ENCODE measurements at regions of chr15 and their contacts with region 1.

Region 1: DNA sequence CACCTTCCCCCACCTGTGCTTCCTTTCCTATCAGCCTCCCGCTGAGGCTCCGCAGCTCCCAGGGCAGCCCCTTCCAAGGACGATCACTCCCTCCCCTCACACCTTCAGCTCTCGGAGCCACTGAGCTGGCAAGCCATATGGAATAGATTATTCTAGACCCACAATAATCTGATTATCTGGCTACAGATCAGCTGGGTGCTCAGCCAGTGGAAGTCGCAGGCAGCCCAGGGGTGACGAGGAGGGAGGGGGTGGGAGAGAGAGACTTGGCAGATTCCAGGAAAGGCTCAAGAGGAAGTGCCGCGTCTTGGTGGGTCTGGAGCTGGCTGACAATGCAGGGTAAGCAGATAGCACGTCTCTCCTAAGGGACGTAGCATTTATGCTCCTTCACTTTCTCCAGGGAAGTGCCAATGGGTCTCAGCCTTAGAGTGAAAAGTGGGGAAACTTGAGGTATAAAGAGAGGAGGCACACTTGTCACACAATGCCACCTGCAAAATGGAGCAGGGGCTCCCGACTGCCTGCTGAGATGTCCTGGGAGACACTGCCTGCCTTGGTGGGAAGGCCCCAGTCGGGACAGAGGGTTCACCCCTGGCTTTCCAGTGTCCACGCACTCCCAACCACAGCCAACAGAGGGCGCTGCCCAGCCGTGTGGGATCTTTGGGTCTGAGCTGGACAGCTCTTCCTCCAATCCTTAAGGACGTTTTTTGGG is 9.4 kb upstream of the MESP1 start:
- DNase-seq: peak; percentile 53 to 99
- H3K4me3 ChIP-seq: no peak overlapping the region
- H3K27ac ChIP-seq: no peak overlapping the region
- H3K4me1 ChIP-seq: peaks cover 0 to 2% (median 0%) of the 10 kb centered on the region in 4 experiments; a peak in 3 of 7 replicates
- H3K27me3 ChIP-seq: no peaks in the 10 kb centered on the region; a peak in 2 of 7 replicates
- CTCF ChIP-seq: peak; percentile 95 to 97 (median 97)
- EP300 ChIP-seq: no peak
- POLR2A ChIP-seq: no peak
- RAD21 ChIP-seq: peak; percentile 95

Region 2: DNA sequence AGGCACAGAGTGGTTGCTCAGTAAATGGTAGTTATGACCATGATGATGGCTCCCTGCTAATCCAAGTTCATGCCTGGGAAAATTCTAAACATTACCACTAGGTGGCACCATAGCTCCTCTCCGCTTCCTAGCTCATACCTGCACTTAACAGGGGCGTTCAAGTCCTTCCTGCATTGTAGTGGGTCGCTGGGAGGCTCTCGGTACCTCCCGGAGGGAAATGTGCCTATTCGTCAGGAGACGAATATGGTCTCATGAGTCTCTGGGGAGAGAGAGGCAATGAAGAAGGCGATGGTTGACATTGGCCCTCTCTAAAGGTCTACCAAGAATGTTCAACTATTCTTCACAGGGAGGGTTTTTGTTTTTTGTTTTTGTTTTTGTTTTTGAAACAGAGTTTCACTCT is 20.3 kb before region 1 on chr15:
- CTCF ChIA-PET with region 1: interaction called, 17 read pairs
- POLR2A ChIA-PET with region 1: no interaction called
- DNase-seq: peak; percentile 62 to 73
- H3K4me3 ChIP-seq: no peak overlapping the region
- H3K27ac ChIP-seq: no peak overlapping the region
- H3K4me1 ChIP-seq: no peaks in the 10 kb centered on the region
- H3K27me3 ChIP-seq: peaks cover 0 to 2% (median under 1%) of the 10 kb centered on the region in 4 experiments; a peak in 5 of 7 replicates
- CTCF ChIP-seq: peak; percentile 29 to 92 (median 83)
- EP300 ChIP-seq: no peak
- POLR2A ChIP-seq: no peak
- RAD21 ChIP-seq: peak; percentile 92 to 95

Region 3: GRCh38 chr15:89781891-89782618 is 21.6 kb after region 1 on chr15:
- CTCF ChIA-PET with region 1: interaction called, 32 read pairs
- POLR2A ChIA-PET with region 1: interaction called, 7 read pairs
- DNase-seq: no peak
- H3K4me3 ChIP-seq: no peak overlapping the region
- H3K27ac ChIP-seq: no peak overlapping the region
- H3K4me1 ChIP-seq: peaks cover 7 to 14% (median 10%) of the 10 kb centered on the region in 4 experiments
- H3K27me3 ChIP-seq: peaks cover 4 to 16% (median 13%) of the 10 kb centered on the region in 4 experiments
- CTCF ChIP-seq: no peak
- EP300 ChIP-seq: no peak
- POLR2A ChIP-seq: no peak
- RAD21 ChIP-seq: no peak

Region 4: DNA sequence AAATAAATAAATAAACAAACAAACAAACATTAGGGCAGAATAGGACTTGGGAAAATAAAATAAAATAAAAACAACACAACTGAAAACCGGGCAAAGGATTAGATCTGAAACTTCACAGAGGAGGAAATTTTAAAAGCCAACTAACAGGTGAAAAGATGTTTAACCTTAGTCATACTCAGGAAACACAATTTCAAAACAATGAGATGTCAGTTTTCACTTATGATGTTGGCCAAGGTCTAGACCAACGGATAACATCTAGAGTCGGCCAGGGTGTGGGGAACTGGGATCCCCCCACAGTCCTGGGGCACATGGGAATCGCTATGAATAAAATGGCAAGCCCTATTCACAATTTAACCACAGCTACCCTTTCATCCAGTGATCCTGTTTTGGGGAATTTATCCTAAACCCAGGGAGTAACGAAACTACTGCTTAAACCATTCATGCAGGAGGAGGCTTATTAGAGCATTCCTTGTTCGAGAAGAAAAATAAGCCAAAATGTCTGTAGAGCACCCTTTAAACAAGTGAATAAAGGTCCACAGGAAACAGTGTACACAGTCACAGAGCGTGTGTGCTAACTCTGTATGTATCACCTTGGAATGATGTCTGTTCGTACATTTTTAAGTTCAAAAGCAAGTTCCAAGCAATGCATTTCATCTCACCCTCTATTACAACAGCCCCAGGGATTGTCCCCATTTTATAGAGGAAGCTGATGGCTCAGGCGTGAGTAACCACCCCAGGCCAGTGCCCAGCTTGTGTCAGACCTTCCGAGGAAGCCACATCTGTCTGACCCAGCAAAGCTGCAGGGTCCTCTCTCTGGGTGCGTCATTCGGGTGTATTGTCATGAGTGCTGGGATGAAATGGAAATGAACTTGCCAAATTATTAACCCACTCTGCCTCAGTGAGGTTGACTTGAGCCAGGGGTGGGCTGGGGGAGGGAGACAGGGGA is 60.5 kb after region 1 on chr15:
- CTCF ChIA-PET with region 1: interaction called, 35 read pairs
- POLR2A ChIA-PET with region 1: interaction called, 3 read pairs
- DNase-seq: no peak
- H3K4me3 ChIP-seq: no peak overlapping the region
- H3K27ac ChIP-seq: no peak overlapping the region
- H3K4me1 ChIP-seq: peaks cover 0 to 9% (median 2%) of the 10 kb centered on the region in 4 experiments; a peak in 1 of 7 replicates
- H3K27me3 ChIP-seq: peaks cover 0 to 7% (median 2%) of the 10 kb centered on the region in 4 experiments; a peak in 6 of 7 replicates
- CTCF ChIP-seq: no peak
- EP300 ChIP-seq: no peak
- POLR2A ChIP-seq: no peak
- RAD21 ChIP-seq: no peak

Region 5: DNA sequence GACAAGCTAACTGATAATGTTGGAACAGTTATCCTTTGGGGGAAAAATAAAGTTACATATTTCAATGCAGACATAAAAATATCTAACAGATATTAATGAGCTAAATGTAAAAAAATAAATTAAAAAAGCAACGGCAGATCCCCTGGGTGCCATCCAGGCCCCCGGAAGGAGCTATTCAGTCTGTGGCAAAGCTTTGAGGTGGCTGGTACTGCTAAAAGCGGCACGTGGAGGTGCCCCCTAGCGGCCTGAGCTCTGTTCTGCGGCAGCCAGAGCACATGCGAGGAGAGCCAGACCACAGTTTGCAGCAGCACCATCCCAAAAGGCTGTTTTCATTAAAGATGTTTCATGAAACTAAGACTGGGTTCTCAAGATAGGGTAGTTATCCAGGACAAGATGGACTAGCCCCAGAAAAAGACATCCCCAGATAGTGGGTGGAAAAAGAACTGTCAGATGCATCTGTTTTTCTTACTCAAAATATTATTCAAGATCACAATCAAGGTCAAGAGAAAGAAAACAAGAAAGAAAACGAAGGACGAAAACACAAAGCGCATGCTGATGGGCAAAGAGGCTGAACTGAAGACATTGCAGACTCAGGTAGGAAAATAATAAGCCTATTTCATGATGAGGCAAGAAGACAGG is 114.6 kb after region 1 on chr15:
- CTCF ChIA-PET with region 1: interaction called, 153 read pairs
- POLR2A ChIA-PET with region 1: interaction called, 10 read pairs
- DNase-seq: peak; percentile 43 to 88
- H3K4me3 ChIP-seq: no peak overlapping the region
- H3K27ac ChIP-seq: no peak overlapping the region
- H3K4me1 ChIP-seq: no peaks in the 10 kb centered on the region
- H3K27me3 ChIP-seq: no peaks in the 10 kb centered on the region
- CTCF ChIP-seq: peak; percentile 94 to 96 (median 95)
- EP300 ChIP-seq: no peak
- POLR2A ChIP-seq: no peak
- RAD21 ChIP-seq: peak; percentile 77 to 87

Region 6: GRCh38 chr15:89971592-89971997 is 211.1 kb after region 1 on chr15:
- CTCF ChIA-PET with region 1: interaction called, 11 read pairs
- POLR2A ChIA-PET with region 1: no interaction called
- DNase-seq: peak; percentile 49 to 90
- H3K4me3 ChIP-seq: no peak overlapping the region
- H3K27ac ChIP-seq: no peak overlapping the region
- H3K4me1 ChIP-seq: peaks cover 0 to 3% (median 0%) of the 10 kb centered on the region in 4 experiments; a peak in 1 of 7 replicates
- H3K27me3 ChIP-seq: no peaks in the 10 kb centered on the region
- CTCF ChIP-seq: peak; percentile 96 to 99 (median 99)
- EP300 ChIP-seq: no peak
- POLR2A ChIP-seq: no peak
- RAD21 ChIP-seq: peak; percentile 72 to 88